Activated naive CD4-positive, alpha-beta T cell treated with anti-CD3 and anti-CD28 coated beads for 36 hours (primary cell): ENCODE measurements at regions of chr1 and their contacts with region 1.

Region 1: GRCh38 chr1:224623743-224624333 is 7.7 kb downstream of the CNIH3 start:
- DNase-seq: peak; percentile 92
- H3K4me3 Mint-ChIP-seq: peak overlapping the region; percentile 46
- H3K27ac Mint-ChIP-seq: peak overlapping the region; percentile 82
- H3K4me1 Mint-ChIP-seq: peaks cover 23% of the 10 kb centered on the region
- H3K27me3 Mint-ChIP-seq: peaks cover 25% of the 10 kb centered on the region

Region 2: DNA sequence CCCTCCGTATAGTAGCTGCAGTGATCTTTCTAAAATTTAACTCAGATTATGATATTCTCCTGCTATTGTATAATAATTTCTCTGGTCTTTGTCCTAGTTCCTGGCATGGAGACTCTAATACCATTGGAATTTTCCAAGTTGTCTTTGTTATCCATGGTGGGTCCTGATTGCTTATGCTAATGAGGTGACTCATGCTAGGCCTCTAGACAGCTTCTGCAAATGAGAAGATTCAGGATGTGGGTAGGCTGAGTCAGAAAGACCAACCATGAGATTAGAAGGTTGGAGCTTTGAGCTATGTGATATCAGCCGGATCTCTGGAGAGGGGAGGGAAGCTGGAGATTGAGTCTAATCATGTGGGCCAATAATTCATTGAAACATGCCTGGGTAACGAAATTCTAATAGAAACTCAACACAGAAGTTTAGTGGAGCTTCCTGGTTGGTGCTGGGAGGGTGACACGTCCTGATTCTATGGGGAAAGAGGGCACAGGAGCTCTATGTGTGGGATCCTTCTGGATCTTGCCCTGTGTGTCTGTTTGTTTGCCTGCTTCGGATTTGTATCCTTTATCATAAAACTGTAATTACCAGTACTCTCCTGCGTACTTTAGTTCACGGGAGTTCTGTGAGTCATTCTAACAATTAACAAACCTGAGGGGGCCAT is 80.9 kb before region 1 on chr1:
- CTCF ChIA-PET with region 1: no interaction called
- intact Hi-C with region 1: loop called (anchors 2 kb)
- DNase-seq: peak; percentile 50
- H3K4me3 Mint-ChIP-seq: no peak overlapping the region
- H3K27ac Mint-ChIP-seq: no peak overlapping the region
- H3K4me1 Mint-ChIP-seq: peaks cover 16% of the 10 kb centered on the region
- H3K27me3 Mint-ChIP-seq: no peaks in the 10 kb centered on the region